CD8-positive, alpha-beta memory T cell (primary cell): ENCODE measurements at regions of chr7 and their contacts with region 1.

Region 1: GRCh38 chr7:43513251-43513650 is 69.7 kb upstream of the STK17A start:
- DNase-seq: no peak
- H3K4me3 ChIP-seq: no peak overlapping the region
- H3K4me3 Mint-ChIP-seq: no peak overlapping the region
- H3K27ac ChIP-seq: no peak overlapping the region
- H3K27ac Mint-ChIP-seq: no peak overlapping the region
- H3K4me1 ChIP-seq: no peaks in the 10 kb centered on the region
- H3K4me1 Mint-ChIP-seq: peaks cover 2 to 18% (median 6%) of the 10 kb centered on the region in 3 donors
- H3K27me3 ChIP-seq: no peaks in the 10 kb centered on the region
- H3K27me3 Mint-ChIP-seq: peaks cover 2 to 12% of the 10 kb centered on the region in 2 donors

Region 2: GRCh38 chr7:43501870-43502269 is 11.4 kb before region 1 on chr7:
- CTCF ChIA-PET with region 1: no interaction called
- POLR2A ChIA-PET with region 1: interaction called, 11 read pairs
- DNase-seq: no peak
- H3K4me3 ChIP-seq: no peak overlapping the region
- H3K4me3 Mint-ChIP-seq: no peak overlapping the region
- H3K27ac ChIP-seq: no peak overlapping the region
- H3K27ac Mint-ChIP-seq: no peak overlapping the region
- H3K4me1 ChIP-seq: no peaks in the 10 kb centered on the region
- H3K4me1 Mint-ChIP-seq: no peaks in the 10 kb centered on the region
- H3K27me3 ChIP-seq: no peaks in the 10 kb centered on the region
- H3K27me3 Mint-ChIP-seq: peaks cover 18 to 20% of the 10 kb centered on the region in 2 donors